ENCODE measurements at regions of chr21 and their contacts with region 1.

Region 1: DNA sequence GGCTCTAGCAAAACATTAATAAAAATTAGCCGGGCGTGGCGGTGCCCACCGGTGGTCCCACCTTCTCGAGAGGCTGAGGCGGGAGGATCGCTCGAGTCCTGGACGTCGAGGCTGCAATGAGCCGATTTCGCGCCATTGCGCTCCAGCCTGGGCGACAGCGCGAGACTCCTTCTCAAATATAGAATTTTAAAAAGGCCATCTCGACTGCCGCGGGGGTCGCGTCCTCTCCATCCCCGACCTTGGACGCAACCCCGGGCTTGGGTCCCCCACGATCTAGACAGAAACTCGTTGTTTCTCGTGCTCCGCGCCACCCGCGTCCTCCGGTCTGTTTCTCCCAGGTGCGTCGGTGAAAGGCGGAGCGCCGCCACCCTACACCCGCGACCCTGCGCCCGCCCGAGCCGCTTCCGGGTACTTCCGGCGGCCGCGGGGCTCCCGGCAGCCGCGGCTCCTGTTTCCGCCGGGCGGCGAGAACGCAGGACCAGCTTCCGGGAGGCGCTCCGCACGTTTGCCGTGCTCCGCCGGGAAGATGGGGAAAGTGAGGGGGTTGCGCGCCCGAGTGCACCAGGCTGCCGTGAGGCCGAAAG is at the start of gene SLX9:
- DNase-seq: peak; percentile 85
- total RNA-seq, gene SLX9: 35.8 TPM

Region 2: GRCh38 chr21:44817506-44817880 is 122.1 kb before region 1 on chr21:
- intact Hi-C with region 1: loop called (anchors 10 kb)
- DNase-seq: peak; percentile 97